Naive thymus-derived CD8-positive, alpha-beta T cell (primary cell): ENCODE measurements at regions of chr11 and their contacts with region 1.

Region 1: DNA sequence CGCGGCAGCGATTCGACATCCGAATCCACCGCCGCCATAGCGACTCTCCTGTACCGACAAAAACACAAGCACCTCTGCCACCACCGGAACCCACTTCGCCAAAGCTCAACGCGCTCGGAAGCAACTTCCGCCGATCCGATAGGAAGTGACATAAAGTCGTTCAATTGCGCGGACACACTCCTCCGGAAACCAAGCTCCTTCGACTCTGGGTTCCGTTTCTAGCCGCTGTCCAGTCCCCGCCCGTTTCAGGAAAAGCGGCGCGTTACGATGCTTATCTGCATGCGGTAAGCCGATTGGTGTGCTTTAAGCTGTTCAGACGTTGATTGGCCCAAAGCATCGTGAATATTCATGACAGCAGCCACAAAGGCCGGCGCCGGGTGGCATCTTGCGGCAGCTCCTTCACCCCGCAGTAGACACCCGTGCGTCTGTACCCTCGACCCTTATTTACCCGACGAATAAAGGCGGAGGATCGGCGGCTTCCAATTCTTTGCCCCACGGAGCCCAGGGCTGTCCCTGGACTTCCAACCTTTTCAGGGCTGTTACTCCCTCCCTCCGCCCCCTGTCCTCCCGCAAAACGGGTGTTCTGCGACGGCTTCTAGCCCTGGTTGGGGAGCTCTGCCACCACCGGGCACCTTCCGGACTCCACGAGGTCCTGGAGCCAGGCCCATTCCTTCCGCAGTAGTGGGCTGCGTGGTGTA is at the start of gene TUT1:
- DNase-seq: peak; percentile 81 to 98 (median 96)
- ATAC-seq: peak; percentile 84 to 86
- H3K4me3 Mint-ChIP-seq: peak within 1 kb of the TSS; percentile 85 to 97 (median 94)
- H3K27ac Mint-ChIP-seq: peak within 1 kb of the TSS; percentile 95 to 99 (median 98)
- H3K4me1 Mint-ChIP-seq: peaks cover 15 to 60% (median 51%) of the 10 kb centered on the region in 4 donors
- H3K27me3 Mint-ChIP-seq: peaks cover 0 to 3% (median 0%) of the 10 kb centered on the region in 5 donors
- polyA plus RNA-seq, gene TUT1: 12.8 to 24.4 (median 16.9) TPM

Region 2: DNA sequence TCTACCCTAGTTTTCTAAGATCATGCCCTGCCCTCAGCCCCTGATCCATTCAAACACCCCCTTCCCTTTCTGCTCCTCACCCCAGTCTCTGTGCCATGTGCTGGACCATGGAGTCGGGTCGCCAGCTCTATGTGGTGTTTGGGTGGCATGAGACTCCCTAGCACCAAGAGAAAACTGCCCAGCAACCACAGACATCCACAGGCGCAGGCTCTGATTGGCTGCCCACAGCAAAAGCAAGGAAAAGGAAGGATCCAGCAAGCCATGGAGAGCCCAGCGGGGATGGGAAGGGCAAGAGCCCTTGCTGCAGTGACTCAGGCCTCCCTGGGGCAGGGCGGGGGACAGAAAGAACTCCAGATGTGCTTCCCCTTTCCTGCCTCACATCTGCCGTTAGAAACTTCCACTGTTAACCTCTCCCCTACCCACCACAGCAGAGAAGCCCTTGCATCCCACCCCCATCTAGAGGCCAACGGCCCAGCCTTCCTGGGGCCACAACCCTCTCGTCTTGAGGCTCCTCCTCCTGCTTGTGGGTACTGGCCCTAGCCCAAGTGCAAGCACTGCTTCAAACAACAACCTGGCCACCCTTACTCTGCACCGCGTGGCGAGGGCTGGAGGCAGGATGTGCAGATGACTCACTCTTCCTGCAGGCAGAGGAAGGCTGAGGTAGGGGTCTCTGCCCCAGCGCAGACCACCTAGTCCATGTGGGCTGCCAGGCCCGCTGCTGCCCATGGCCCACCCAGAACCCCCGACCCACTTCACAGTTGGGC is 35.3 kb before region 1 on chr11:
- POLR2A ChIA-PET with region 1: interaction called, 34 read pairs
- DNase-seq: peak; percentile 57 to 94 (median 80)
- ATAC-seq: peak; percentile 50 to 56
- H3K4me3 Mint-ChIP-seq: peak overlapping the region; percentile 61 to 90 (median 86)
- H3K27ac Mint-ChIP-seq: peak overlapping the region; percentile 97 to 100 (median 99)
- H3K4me1 Mint-ChIP-seq: peaks cover 50 to 98% (median 88%) of the 10 kb centered on the region in 4 donors
- H3K27me3 Mint-ChIP-seq: peaks cover 0 to 2% (median 0%) of the 10 kb centered on the region in 5 donors

Region 3: DNA sequence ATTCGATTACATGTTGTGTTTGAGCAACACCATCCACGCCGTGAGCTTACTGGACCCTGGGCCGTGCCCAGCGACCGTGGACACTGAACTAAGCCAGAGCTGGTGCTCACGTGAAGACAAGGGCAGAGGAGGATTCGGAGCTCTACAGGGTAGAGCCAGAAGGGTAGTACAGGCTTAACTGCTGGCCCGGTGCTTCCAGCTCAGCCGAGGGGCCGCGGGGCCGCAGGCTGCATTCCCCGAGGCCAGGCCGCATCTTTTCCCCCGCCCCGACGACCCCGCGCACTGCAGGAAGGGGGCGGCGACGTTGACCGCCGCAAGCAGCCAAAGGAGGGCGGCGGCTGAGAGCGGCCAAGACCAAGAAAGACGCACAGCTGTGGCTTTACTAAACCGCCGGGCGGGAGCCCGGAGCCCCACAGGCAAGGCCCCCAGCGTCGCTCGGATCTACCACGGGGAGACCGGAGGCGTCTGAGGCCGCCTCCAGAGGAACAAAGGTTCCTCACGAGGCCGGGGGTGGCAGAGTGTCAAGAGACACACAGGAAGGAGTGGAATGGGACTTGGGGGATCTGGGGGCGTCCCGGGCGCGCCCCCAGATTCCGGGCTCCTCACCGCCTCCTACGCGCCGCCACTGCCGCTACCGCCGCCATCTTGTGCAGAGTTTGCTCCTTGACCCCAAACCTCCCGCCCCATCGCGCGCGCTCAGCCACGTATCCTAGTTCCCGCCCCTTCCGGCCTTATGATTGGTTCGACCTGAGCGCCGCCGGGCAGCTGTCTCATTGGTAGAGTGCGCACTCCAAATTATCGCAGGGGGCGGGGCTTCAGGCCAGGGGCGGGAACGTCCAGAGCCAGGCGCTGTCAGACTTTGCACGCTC is 54.6 kb after region 1 on chr11 and contains the start of gene GANAB:
- POLR2A ChIA-PET with region 1: interaction called, 54 read pairs
- DNase-seq: peak; percentile 94 to 99 (median 97)
- ATAC-seq: peak; percentile 97 to 98
- H3K4me3 Mint-ChIP-seq: peak within 1 kb of the TSS; percentile 92 to 99 (median 97)
- H3K27ac Mint-ChIP-seq: peak within 1 kb of the TSS; percentile 90 to 99 (median 98)
- H3K4me1 Mint-ChIP-seq: peaks cover 9 to 50% (median 32%) of the 10 kb centered on the region in 4 donors
- H3K27me3 Mint-ChIP-seq: no peaks in the 10 kb centered on the region
- polyA plus RNA-seq, gene GANAB: 171 to 197 (median 174) TPM

Region 4: DNA sequence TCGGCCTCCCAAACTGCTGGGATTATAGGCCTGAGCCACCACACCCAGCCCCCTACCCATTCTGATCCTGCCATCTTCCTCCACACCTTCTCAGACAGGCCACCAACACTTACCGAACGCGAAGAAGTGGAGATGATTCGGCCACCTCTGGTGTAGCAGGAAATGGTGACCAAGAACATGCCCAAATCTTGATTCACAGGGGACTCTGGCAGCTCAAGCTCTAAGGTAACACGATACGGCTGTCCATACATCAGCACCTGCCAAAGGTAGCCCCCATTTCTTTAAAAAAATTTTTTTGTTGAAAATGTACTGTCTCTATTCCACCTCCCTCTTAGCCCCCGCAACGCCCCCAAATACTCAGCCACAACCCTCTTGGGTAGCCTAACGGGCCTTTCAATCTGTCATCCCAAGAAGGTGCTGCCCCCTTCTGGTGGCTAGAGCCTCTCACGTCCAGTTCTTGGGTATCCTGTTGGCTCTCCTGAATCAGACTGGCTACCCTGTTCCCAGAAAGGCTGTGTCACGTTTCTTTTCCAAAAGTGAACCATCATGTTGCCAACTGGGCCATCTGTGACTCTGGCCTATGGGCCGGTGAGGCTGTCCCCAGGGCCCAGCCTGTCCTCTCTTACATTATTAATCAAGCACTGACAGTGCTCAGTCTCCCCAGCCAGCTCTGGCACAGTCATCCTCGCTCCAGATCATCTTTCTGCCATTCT is 103.0 kb after region 1 on chr11:
- POLR2A ChIA-PET with region 1: interaction called, 14 read pairs
- DNase-seq: peak; percentile 61 to 90 (median 74)
- ATAC-seq: peak; percentile 84 to 97
- H3K4me3 Mint-ChIP-seq: no peak overlapping the region
- H3K27ac Mint-ChIP-seq: peak overlapping the region in 5 of 10 donors; percentile 14 to 70 (median 43)
- H3K4me1 Mint-ChIP-seq: peaks cover 5 to 9% (median 7%) of the 10 kb centered on the region in 4 donors
- H3K27me3 Mint-ChIP-seq: no peaks in the 10 kb centered on the region

Region 5: GRCh38 chr11:62787005-62787759 is 195.6 kb after region 1 on chr11 and contains the start of gene TMEM179B:
- POLR2A ChIA-PET with region 1: interaction called, 12 read pairs
- DNase-seq: peak; percentile 90 to 99 (median 97)
- ATAC-seq: peak; percentile 69 to 73
- H3K4me3 Mint-ChIP-seq: peak within 1 kb of the TSS; percentile 90 to 96 (median 96)
- H3K27ac Mint-ChIP-seq: peak within 1 kb of the TSS; percentile 92 to 98 (median 96)
- H3K4me1 Mint-ChIP-seq: peaks cover 14 to 53% (median 46%) of the 10 kb centered on the region in 4 donors
- H3K27me3 Mint-ChIP-seq: no peaks in the 10 kb centered on the region
- polyA plus RNA-seq, gene TMEM179B: 109 to 126 (median 122) TPM

Region 6: GRCh38 chr11:62880803-62881578 is 289.4 kb after region 1 on chr11 and contains the start of gene SLC3A2:
- POLR2A ChIA-PET with region 1: interaction called, 15 read pairs
- DNase-seq: peak; percentile 77 to 90 (median 84)
- ATAC-seq: peak; percentile 81 to 82
- H3K4me3 Mint-ChIP-seq: peak within 1 kb of the TSS; percentile 96 to 100 (median 99)
- H3K27ac Mint-ChIP-seq: peak within 1 kb of the TSS; percentile 97 to 100 (median 100)
- H3K4me1 Mint-ChIP-seq: peaks cover 33 to 53% (median 51%) of the 10 kb centered on the region in 4 donors
- H3K27me3 Mint-ChIP-seq: no peaks in the 10 kb centered on the region
- polyA plus RNA-seq, gene SLC3A2: 119 to 164 (median 125) TPM